MCF 10A (cell line): ENCODE measurements at regions of chr1 and their contacts with region 1.

Region 1: DNA sequence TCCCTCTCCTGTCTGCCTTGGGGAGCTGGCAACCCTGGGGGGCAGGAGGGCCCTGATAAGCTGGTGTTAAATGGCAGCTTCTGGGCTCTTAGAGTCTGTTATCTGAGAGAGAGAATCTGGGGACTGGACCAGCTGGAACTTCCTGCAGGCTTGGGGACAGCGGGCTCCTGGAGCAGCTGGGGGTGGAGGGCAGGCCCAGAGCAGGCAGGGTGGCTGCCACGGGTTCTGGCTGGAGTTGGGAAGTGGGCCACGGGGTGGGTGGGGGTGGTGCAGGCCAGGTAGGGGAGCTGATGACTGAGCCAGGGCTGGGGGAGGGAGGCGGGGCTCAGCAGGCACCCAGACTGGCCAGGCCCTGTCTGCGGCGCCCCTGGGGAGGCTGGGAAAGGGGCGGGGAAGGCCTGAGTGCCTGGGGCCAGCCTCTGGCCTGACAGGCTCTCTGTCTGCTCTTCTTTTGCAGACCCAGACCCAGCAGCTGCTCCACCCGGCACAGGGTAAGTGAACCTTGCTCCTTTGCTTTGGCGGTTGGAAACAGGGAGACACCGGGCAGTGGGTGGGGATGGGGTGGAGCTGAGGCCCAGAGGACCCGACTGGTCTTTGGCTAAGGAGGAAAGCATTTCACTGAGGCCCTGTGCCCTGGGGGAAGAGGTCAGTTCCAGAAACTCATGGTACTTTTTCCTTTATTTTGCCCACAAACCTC is 48.6 kb downstream of the ARHGEF10L start:
- DNase-seq: peak; percentile 54
- H3K4me3 Mint-ChIP-seq: peak overlapping the region; percentile 63
- H3K27ac Mint-ChIP-seq: peak overlapping the region; percentile 46
- H3K4me1 Mint-ChIP-seq: peaks cover 31% of the 10 kb centered on the region
- H3K27me3 Mint-ChIP-seq: no peaks in the 10 kb centered on the region
- CTCF ChIP-seq: no peak

Region 2: DNA sequence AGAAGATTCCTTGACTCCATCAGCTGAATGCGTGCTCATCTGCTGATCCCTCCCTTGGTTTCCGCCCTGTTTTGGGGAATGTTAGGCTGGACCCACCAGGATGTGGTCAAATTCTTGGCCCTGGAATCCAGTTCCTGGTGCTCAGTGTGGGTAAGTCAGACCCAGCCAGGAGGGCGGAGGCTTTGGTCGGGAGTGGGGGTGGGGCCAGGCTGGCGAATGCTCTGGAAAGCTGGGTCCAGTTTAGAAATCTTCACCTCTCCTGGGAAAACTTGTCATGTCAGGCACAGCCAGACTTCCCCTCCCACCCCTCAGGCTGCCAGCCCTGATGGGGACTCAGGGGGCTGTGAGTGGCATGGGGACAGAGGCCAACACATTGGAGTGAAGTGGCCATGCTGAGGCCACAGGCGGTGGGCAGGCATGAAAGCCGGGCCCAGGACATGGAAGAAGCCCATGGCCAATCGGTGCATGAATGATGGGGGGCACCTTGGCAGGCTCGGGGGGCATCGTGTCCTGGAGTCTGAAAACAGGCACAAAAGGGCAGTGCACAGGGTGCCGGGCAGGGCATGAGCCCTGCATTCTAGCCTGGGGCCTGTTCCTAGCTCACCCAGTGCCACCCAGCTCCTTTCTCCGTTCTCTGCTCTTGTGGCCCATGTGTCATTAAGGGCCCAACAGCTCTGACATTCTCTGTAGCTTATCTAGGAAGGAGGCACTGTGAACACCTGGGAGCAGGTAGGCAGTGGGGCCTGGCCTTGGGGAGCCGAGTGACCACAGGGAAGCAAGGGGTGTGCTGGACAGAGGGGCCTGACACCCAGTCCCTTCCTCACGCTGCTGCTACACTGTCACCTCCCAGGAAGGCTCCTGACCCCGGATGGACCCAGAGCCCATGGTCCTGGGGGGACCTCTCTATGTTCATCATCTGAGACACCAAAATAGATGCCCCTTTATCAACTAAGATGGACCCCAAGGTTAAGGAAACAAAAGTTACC is 397.8 kb before region 1 on chr1:
- CTCF ChIA-PET with region 1: no interaction called
- POLR2A ChIA-PET with region 1: no interaction called
- intact Hi-C with region 1: no loop called
- DNase-seq: peak; percentile 93
- H3K4me3 Mint-ChIP-seq: peak overlapping the region; percentile 25
- H3K27ac Mint-ChIP-seq: peak overlapping the region; percentile 92
- H3K4me1 Mint-ChIP-seq: peaks cover 61% of the 10 kb centered on the region
- H3K27me3 Mint-ChIP-seq: no peaks in the 10 kb centered on the region
- CTCF ChIP-seq: no peak

Region 3: DNA sequence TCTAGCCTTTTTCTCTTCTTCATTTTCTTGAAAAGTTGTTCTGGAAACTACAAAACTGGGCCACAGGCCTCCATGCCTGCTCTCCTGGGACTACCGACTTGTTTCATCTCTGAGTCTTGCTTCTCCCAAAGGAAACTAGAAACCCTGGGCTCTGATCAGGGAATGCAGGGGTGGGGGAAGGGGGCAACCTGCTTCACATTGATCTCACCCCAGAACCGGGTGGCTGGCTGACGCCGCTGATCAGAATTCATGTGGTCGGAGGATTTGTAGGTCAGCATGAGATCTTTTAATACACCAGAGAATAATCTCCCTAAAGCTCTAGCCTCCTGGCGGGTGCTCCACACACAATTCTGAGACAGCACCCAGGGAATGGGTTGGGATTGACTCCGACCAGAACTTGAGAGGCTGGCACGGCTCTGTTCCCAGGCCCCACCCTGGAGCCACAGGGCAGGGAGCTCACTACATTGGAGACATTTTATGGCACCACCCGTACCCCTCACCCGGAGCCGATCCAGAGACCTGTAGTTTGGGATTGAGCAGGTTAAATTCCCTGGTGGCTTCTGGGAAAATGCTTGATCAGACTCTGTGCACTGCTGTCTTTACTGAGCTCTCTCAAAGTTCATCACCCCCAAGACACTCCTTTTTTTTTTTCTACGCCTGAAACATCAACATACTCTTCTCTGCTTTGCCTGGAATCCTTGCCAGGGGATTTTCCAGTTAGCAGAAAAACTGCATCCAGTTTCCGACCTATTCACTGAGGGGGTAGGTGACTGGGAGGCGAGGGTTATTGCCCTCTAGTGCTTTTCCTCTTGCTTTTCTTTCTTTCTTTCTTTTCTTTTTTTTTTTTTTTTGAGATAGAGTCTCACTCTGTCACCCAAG is 60.9 kb before region 1 on chr1:
- CTCF ChIA-PET with region 1: no interaction called
- POLR2A ChIA-PET with region 1: no interaction called
- intact Hi-C with region 1: no loop called
- DNase-seq: no peak
- H3K4me3 Mint-ChIP-seq: no peak overlapping the region
- H3K27ac Mint-ChIP-seq: no peak overlapping the region
- H3K4me1 Mint-ChIP-seq: no peaks in the 10 kb centered on the region
- H3K27me3 Mint-ChIP-seq: no peaks in the 10 kb centered on the region
- CTCF ChIP-seq: no peak

Region 4: GRCh38 chr1:17551755-17552234 is 36.3 kb before region 1 on chr1:
- CTCF ChIA-PET with region 1: no interaction called
- POLR2A ChIA-PET with region 1: no interaction called
- intact Hi-C with region 1: loop called (anchors 5 kb)
- DNase-seq: peak; percentile 70
- H3K4me3 Mint-ChIP-seq: no peak overlapping the region
- H3K27ac Mint-ChIP-seq: peak overlapping the region; percentile 27
- H3K4me1 Mint-ChIP-seq: peaks cover 23% of the 10 kb centered on the region
- H3K27me3 Mint-ChIP-seq: no peaks in the 10 kb centered on the region
- CTCF ChIP-seq: no peak

Region 5: DNA sequence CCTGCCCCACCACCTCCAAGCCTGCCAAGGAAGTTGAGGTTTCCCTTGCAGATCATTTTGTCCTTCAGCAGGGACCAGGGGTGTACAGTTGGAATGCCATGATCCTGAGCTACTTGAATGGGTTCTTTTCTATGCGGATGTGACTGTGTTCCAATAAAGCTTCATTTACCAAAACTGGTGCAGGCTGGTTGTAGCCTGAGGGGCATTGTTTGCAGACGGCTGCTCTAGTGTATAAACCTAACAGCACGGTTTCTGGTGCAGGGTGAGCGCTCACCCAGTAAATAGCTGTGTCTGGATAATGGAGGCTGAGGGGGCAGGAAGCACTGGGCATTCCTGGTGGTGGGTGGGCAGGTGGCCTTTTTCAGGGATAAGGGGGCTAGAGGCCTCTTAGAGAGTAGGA is 94.3 kb after region 1 on chr1:
- CTCF ChIA-PET with region 1: no interaction called
- POLR2A ChIA-PET with region 1: no interaction called
- intact Hi-C with region 1: no loop called
- DNase-seq: no peak
- H3K4me3 Mint-ChIP-seq: no peak overlapping the region
- H3K27ac Mint-ChIP-seq: no peak overlapping the region
- H3K4me1 Mint-ChIP-seq: no peaks in the 10 kb centered on the region
- H3K27me3 Mint-ChIP-seq: no peaks in the 10 kb centered on the region
- CTCF ChIP-seq: no peak

Region 6: GRCh38 chr1:17711941-17712340 is 123.8 kb after region 1 on chr1:
- CTCF ChIA-PET with region 1: no interaction called
- POLR2A ChIA-PET with region 1: no interaction called
- intact Hi-C with region 1: no loop called
- DNase-seq: no peak
- H3K4me3 Mint-ChIP-seq: no peak overlapping the region
- H3K27ac Mint-ChIP-seq: no peak overlapping the region
- H3K4me1 Mint-ChIP-seq: no peaks in the 10 kb centered on the region
- H3K27me3 Mint-ChIP-seq: peaks cover 12% of the 10 kb centered on the region
- CTCF ChIP-seq: no peak